MCF 10A (cell line): ENCODE measurements at regions of chr19 and their contacts with region 1.

Region 1: DNA sequence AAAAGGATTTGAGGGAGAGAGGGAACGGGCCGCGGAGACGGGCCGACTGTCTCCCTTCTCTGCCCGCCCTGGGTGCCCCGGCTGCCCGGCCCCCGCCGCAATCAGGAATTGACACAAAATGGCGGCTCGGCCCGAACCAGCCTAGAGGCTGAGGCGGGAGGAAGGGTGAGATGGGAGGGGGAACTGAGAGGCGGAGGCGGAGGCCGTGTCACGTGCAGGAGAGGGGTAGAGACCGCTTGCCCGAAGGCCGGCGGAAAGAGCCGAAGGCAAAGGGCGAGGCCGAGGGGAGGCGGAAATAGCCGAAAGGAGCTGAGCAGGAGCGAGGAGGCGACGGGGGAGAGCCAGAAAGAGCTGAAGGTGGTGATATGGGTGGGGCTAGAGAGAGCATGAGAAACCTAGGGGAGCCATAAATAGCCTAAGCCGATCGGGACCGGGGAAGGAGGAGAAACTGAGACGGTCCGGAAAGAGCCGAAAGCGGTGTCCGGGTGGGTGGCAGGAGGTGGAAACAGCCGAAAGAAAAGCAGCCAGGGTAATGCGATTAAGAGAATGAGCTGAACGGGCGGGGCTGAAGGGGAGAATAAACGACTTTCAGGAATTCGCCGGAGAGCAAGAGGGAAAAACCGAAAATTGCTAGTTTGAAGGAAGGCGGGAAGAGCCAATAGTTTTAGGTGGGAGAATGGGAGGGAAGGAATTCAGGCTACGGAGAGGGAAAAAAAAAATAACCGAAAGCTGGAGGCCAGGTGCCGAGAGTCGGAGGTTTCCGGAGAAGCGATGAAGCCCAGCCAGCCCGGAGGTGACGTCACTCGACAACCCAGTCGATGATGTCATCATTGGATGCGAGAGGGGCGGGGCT is at the start of gene ZC3H4:
- DNase-seq: peak; percentile 100
- H3K4me3 Mint-ChIP-seq: peak within 1 kb of the TSS; percentile 94
- H3K27ac Mint-ChIP-seq: peak within 1 kb of the TSS; percentile 99
- H3K4me1 Mint-ChIP-seq: peaks cover 22% of the 10 kb centered on the region
- H3K27me3 Mint-ChIP-seq: no peaks in the 10 kb centered on the region
- CTCF ChIP-seq: no peak
- total RNA-seq, gene ZC3H4: 41.4 and 41.8 TPM in 2 replicates

Region 2: GRCh38 chr19:46271481-46272197 is 841.6 kb before region 1 on chr19:
- CTCF ChIA-PET with region 1: no interaction called
- POLR2A ChIA-PET with region 1: no interaction called
- intact Hi-C with region 1: no loop called
- DNase-seq: peak; percentile 68
- H3K4me3 Mint-ChIP-seq: no peak overlapping the region
- H3K27ac Mint-ChIP-seq: no peak overlapping the region
- H3K4me1 Mint-ChIP-seq: peaks cover 11% of the 10 kb centered on the region
- H3K27me3 Mint-ChIP-seq: no peaks in the 10 kb centered on the region
- CTCF ChIP-seq: no peak

Region 3: DNA sequence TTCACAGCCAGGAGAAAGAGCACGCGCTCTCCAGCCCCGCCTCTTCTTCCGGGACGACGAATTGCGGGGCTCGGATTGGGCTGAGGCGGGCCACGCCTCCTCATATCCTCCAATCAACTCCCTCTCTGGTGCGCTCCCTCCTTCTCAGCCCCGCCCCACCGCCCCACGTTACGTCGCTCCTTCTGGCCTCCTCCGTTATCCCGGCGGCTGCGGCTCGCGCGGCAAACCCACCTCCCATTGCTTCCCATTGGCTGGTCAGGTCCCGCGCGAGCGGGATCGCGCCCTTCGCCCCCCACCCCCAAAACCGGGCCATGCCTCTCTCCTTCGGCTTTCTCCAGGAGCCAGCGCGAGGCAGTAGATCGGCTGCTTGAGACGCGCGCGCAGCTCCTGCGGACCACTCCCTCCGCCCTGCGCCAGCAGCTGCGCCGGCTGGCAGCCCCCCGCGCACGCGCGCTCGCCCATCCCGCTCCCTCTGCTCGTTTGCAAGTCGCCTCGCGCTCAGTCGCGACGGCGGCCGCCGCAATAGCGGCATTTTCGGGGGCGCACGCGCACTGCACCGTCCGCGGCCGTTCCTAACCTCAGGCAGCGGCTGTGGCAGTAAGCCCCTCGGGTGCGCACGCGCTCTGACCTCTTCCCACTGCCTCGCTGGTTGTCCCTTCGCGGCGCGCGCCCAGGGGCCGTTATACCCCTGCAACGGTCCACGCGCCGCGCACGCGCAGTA is 252.9 kb before region 1 on chr19:
- CTCF ChIA-PET with region 1: interaction called, 3 read pairs
- POLR2A ChIA-PET with region 1: interaction called, 12 read pairs
- intact Hi-C with region 1: no loop called
- DNase-seq: peak; percentile 99
- H3K4me3 Mint-ChIP-seq: no peak overlapping the region
- H3K27ac Mint-ChIP-seq: peak overlapping the region; percentile 71
- H3K4me1 Mint-ChIP-seq: peaks cover 11% of the 10 kb centered on the region
- H3K27me3 Mint-ChIP-seq: no peaks in the 10 kb centered on the region
- CTCF ChIP-seq: no peak

Region 4: GRCh38 chr19:47035127-47036096 is 77.8 kb before region 1 on chr19:
- CTCF ChIA-PET with region 1: interaction called, 3 read pairs
- POLR2A ChIA-PET with region 1: interaction called, 19 read pairs
- intact Hi-C with region 1: loop called (anchors 5 kb)
- DNase-seq: peak; percentile 95
- H3K4me3 Mint-ChIP-seq: peak overlapping the region; percentile 74
- H3K27ac Mint-ChIP-seq: peak overlapping the region; percentile 94
- H3K4me1 Mint-ChIP-seq: peaks cover 8% of the 10 kb centered on the region
- H3K27me3 Mint-ChIP-seq: no peaks in the 10 kb centered on the region
- CTCF ChIP-seq: peak; percentile 91

Region 5: GRCh38 chr19:47094557-47095475 is 18.4 kb before region 1 on chr19:
- CTCF ChIA-PET with region 1: interaction called, 3 read pairs
- POLR2A ChIA-PET with region 1: interaction called, 49 read pairs
- intact Hi-C with region 1: no loop called
- DNase-seq: no peak
- H3K4me3 Mint-ChIP-seq: no peak overlapping the region
- H3K27ac Mint-ChIP-seq: peak overlapping the region; percentile 92
- H3K4me1 Mint-ChIP-seq: peaks cover 21% of the 10 kb centered on the region
- H3K27me3 Mint-ChIP-seq: no peaks in the 10 kb centered on the region
- CTCF ChIP-seq: no peak

Region 6: GRCh38 chr19:47130591-47131227 is 17.5 kb after region 1 on chr19 and contains the start of gene SAE1:
- CTCF ChIA-PET with region 1: interaction called, 11 read pairs
- POLR2A ChIA-PET with region 1: interaction called, 48 read pairs
- intact Hi-C with region 1: no loop called
- DNase-seq: peak; percentile 98
- H3K4me3 Mint-ChIP-seq: peak within 1 kb of the TSS; percentile 99
- H3K27ac Mint-ChIP-seq: peak within 1 kb of the TSS; percentile 92
- H3K4me1 Mint-ChIP-seq: peaks cover 35% of the 10 kb centered on the region
- H3K27me3 Mint-ChIP-seq: no peaks in the 10 kb centered on the region
- CTCF ChIP-seq: peak; percentile 23
- total RNA-seq, gene SAE1: 76.1 and 81.7 TPM in 2 replicates

Region 7: DNA sequence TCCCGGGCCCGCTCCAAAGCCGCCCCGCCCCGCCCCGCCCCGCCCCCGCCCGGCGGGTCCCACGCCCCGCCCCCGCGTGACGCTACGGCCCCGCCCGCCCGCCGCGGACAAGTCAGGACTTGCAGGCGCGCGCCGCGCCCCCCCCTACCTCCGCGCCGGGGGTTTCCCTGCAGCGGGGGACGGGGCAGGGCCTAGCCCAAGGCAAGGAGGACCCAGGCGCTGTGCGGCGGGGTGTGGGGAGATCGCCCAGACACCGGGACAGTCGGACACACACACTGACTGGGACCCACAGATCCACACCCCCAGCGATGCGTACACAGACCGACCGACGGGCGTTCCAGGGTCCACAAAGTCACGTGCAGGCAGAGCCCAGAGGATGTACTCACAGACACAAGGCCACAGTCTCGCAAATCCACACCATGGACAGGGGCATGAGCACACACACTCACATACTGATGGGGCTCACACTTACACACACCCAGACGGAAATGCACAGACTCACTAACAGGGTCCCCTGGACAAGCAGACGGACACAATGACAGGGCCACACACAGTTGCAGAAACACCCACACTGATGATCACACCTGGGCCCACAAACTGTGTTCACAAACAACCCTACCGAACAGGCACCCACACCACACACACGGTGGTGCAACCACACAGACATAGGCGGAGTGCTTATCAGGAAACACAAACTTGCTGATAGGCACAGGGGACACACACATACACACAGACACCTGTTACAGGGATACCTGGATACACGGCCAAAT is 118.2 kb after region 1 on chr19:
- CTCF ChIA-PET with region 1: no interaction called
- POLR2A ChIA-PET with region 1: interaction called, 24 read pairs
- intact Hi-C with region 1: no loop called
- DNase-seq: peak; percentile 76
- H3K4me3 Mint-ChIP-seq: no peak overlapping the region
- H3K27ac Mint-ChIP-seq: peak overlapping the region; percentile 87
- H3K4me1 Mint-ChIP-seq: peaks cover 12% of the 10 kb centered on the region
- H3K27me3 Mint-ChIP-seq: no peaks in the 10 kb centered on the region
- CTCF ChIP-seq: no peak